Left ventricle myocardium inferior (tissue), 1 donor: ENCODE measurements at regions of chrX and their contacts with region 1.

Region 1: DNA sequence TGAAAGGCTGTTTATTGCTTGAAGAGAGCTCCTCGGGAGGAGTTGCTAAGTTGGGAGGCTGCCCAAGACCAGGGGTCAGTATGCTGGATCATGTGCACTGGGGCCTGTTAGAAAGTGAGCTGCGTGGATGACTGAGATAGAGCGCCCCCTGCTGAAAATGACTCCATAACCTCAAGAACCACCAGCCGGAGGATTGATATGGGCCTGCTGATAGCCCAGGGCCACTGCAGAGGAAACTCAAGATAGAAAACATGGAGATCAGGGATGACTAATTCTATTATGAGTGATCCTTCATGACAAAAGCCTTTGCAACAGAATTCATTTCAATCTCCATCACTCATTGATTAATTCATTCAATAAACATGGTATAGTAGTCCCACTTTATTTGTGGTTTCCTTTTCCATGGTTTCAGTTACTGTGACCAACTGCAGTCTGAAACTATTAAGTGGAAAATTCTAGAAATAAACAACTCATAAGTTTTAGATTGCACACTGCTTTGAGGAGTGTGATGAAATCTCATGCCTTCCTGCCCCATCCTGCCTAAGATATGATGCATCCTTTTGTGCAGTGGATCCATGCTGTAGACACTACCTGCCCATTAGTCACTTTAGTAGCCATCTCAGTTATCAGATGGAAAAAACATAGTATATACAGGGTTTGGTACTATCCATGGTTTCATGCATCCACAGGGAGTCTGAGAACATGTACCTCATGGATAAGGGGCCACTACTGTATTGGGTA is 126.7 kb upstream of the MBNL3 start:
- DNase-seq: no peak
- H3K4me3 ChIP-seq: no peak overlapping the region
- H3K27ac ChIP-seq: no peak overlapping the region
- H3K4me1 ChIP-seq: no peaks in the 10 kb centered on the region
- H3K27me3 ChIP-seq: no peaks in the 10 kb centered on the region
- CTCF ChIP-seq: peak; percentile 50

Region 2: DNA sequence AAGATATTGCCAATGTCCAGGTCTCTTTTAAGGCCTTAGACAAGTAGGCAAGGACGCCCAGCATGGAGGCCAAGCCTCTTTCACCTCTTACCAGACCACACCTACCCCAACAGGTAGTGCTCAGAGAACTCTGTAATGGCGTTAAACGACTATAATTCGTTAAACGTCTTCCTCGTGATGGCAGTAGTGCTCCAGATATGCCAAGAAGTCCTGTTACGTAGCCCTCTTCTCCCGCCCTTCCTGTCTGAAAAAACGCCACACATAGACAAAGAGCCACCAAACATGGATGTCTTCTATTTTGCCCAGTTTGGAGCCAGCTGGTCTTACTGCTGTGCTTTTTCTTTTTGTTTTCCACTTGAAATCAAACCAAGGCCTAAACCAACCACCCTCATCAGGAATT is 880.9 kb before region 1 on chrX:
- intact Hi-C with region 1: no loop called
- DNase-seq: no peak
- H3K4me3 ChIP-seq: no peak overlapping the region
- H3K27ac ChIP-seq: no peak overlapping the region
- H3K4me1 ChIP-seq: no peaks in the 10 kb centered on the region
- H3K27me3 ChIP-seq: no peaks in the 10 kb centered on the region
- CTCF ChIP-seq: no peak

Region 3: DNA sequence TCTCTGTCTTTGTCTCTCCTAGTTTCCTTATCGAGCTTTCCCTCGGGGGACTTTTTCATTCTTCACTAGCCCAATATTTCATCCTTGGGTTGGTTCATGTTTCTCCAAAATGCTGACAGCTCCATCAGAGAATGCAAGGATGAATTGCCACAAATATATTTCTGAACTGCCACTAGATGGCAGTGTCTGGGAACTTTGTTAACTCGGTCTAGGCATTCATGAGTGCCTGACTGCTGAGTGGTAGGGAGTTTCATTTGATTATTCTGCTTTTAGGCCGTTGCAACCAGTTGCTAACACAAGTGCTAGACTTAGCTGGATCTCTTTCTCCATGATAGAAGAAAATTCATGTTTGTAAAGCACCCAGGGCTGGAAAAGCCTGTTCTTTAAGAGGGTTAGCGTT is 322.8 kb before region 1 on chrX:
- intact Hi-C with region 1: loop called (anchors 10 kb)
- DNase-seq: no peak
- H3K4me3 ChIP-seq: no peak overlapping the region
- H3K27ac ChIP-seq: no peak overlapping the region
- H3K4me1 ChIP-seq: no peaks in the 10 kb centered on the region
- H3K27me3 ChIP-seq: no peaks in the 10 kb centered on the region
- CTCF ChIP-seq: peak; percentile 66

Region 4: DNA sequence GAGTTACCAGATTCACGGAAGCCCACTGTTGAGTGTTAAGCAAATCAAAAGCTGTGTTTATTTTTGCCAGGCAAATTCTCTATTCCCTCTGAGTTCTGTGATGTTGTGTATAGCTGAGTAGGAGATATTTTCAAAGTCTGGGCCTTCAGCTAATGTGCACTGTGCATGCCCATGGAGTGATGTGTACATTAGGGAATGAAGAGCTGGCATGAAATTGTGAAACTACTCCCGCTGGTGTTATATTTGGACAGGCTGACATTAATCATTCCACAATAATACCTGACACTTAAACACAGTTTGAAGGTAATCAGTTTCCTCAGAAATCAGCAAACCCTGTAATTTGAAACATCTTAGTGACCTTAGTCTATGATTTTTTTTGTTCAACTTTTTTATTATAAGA is 38.6 kb before region 1 on chrX:
- intact Hi-C with region 1: no loop called
- DNase-seq: no peak
- H3K4me3 ChIP-seq: no peak overlapping the region
- H3K27ac ChIP-seq: no peak overlapping the region
- H3K4me1 ChIP-seq: no peaks in the 10 kb centered on the region
- H3K27me3 ChIP-seq: no peaks in the 10 kb centered on the region
- CTCF ChIP-seq: no peak